Activated T-helper 1 cell treated with anti-CD3 and anti-CD28 coated beads, Interleukin-12 subunit alpha, Interleukin-12 subunit beta, Interleukin-2, Interleukin-4 antibody, amounts not matched to agents 30 ng/mL and 10 ng/mL and 1 ng/mL, durations not matched to agents 14 hours and 24 hours and 36 hours (primary cell): ENCODE measurements at regions of chr12 and their contacts with region 1.

Region 1: DNA sequence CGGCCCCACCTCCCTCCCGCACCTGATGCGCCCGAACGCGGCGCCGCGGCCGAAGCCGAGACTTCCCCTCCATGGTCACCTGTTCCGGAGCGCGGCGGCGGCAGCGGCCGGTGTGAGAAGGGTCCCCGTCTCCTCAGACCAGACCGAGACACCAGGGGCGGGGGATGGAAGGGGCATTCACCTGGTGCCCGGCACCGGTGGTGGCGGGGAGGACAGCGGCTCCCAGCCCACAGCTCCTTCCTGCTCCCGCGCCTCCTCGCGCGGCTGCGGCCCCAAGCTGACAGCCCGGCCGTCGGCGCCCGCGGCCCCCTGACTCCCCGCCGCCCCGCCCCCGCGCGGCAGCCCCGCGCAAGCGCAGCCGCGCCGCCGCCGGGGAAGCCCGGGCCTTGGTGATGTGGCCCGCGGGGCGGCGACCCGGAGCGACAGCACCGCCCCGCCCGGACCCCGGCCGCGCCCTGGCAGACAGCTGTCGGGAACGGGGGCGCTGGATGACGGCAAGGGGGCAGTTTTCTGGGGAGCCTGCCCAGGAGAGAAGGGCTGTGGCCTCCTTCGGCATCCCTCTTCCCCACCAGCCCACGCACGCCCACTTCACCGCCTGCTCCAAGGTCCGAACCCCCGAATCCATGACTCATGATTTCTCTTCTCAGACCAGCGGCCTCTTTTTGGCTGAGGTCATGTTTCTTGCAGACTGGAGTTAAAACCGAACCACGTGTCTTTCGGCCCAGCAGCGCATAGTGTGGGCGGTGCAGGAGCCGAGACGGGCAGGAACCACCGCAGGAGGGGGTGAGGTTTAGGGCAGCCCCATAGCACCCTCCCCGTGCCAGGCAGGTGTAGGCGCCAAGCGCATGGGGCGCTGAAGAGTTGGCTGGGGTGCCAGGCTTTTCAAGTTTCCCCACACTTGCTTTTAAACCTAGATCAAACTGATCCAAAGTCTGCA is at the start of gene SLC41A2:
- DNase-seq: peak; percentile 80
- H3K4me3 Mint-ChIP-seq: peak within 1 kb of the TSS; percentile 90
- H3K27ac Mint-ChIP-seq: peak within 1 kb of the TSS; percentile 96
- H3K4me1 Mint-ChIP-seq: peaks cover 44% of the 10 kb centered on the region
- H3K27me3 Mint-ChIP-seq: peaks cover 24% of the 10 kb centered on the region
- total RNA-seq, gene SLC41A2: 16.4 and 19.0 TPM in 2 replicates

Region 2: DNA sequence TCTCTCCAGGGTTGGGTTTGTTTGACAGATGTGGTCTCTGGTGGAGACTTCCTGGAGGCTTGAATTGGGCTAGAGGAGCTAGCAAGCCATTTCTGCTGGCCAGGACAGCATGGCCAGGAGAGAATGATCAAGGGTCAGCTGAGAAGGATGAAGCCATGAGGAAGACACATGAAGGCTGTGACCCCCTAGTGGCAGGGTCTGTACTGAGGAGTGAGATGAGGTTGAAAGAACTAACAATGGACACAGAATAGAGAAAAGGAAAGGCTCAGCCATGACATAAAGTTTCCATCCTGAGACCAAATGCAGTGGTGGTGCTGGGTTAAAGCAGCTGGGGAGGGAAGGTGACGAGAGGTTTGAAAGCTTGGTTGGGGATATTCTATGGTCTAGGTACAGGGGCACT is 1207.1 kb before region 1 on chr12:
- intact Hi-C with region 1: no loop called
- DNase-seq: no peak
- H3K4me3 Mint-ChIP-seq: no peak overlapping the region
- H3K27ac Mint-ChIP-seq: no peak overlapping the region
- H3K4me1 Mint-ChIP-seq: no peaks in the 10 kb centered on the region
- H3K27me3 Mint-ChIP-seq: peaks cover 4% of the 10 kb centered on the region

Region 3: DNA sequence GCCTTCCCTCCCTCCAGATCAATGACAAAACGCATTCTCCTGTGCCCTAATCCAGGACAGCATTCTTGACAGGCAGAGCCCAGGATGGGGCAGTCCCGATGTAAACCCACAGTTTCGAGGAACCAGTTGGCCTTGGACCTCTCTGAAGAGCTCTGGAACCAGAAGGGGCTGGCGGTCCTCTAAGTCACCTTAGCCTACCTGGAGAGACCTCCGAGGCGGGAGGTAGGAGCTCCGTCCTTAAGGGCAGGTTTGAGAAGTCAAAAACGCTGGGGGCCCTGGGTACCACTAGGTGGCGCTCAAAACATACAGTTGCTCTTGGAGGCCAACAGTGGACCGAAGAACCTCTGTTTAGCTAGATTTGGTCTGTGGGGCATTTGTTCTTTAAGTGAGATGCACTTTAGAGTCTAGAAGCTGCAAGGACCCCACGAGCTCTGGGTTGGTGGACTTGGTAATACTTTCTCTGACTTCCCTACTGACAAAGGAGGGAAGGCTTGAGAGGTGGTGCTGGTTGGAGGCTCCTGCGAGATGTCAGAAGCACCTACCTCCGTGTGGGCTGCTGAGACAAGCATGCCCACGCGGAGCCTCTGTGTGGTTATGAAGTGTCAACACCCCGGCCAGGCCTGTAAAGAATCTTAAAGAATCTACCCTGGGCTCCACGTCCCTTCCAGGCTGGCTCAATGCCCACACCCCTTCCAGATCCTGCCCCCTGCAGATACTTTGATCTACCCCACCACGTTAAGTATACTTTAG is 576.4 kb before region 1 on chr12:
- intact Hi-C with region 1: loop called (anchors 1 kb)
- DNase-seq: peak; percentile 69
- H3K4me3 Mint-ChIP-seq: peak overlapping the region; percentile 52
- H3K27ac Mint-ChIP-seq: peak overlapping the region; percentile 33
- H3K4me1 Mint-ChIP-seq: peaks cover 20% of the 10 kb centered on the region
- H3K27me3 Mint-ChIP-seq: peaks cover 2% of the 10 kb centered on the region

Region 4: GRCh38 chr12:104653730-104654664 is 304.3 kb before region 1 on chr12:
- intact Hi-C with region 1: no loop called
- DNase-seq: no peak
- H3K4me3 Mint-ChIP-seq: no peak overlapping the region
- H3K27ac Mint-ChIP-seq: peak overlapping the region; percentile 31
- H3K4me1 Mint-ChIP-seq: peaks cover 78% of the 10 kb centered on the region
- H3K27me3 Mint-ChIP-seq: no peaks in the 10 kb centered on the region

Region 5: DNA sequence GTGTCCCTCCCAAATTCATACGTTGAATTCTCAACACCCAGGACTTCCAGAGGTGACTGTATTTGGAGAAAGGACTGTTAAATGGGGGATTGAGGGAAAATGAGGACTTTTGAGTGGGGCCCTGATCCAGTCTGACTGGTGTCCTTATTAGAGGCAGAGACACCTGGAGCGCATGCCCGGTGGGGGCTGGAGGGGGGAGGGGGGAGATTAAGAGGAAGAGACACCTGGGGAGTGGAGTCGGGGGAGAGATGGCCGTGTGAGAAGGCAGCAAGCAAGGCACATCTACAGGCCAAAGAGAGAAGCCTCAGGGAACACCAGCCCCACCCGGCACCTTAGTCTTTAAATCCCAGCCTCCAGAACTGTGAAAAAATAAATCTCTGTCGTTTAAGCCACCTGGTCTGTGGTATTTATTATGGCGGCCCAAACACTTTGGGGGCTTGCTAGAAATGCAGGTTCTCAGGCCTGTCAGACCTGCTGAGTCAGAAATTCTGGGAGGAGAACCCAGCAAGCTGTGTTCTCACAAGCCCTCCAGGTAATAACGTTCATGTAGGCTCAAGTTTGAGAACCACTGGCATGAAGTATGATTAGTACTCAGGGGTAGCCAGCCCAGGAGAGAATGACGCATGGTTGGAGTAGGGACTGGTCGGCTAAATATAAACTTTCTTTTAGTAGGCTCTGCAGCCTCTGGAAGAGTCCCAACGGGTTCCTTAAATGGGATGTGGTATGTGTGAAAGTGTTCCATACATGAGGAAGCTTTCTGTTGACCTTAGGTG is 209.7 kb before region 1 on chr12:
- intact Hi-C with region 1: loop called (anchors 5 kb)
- DNase-seq: no peak
- H3K4me3 Mint-ChIP-seq: peak overlapping the region; percentile 34
- H3K27ac Mint-ChIP-seq: peak overlapping the region; percentile 25
- H3K4me1 Mint-ChIP-seq: peaks cover 74% of the 10 kb centered on the region
- H3K27me3 Mint-ChIP-seq: no peaks in the 10 kb centered on the region

Region 6: DNA sequence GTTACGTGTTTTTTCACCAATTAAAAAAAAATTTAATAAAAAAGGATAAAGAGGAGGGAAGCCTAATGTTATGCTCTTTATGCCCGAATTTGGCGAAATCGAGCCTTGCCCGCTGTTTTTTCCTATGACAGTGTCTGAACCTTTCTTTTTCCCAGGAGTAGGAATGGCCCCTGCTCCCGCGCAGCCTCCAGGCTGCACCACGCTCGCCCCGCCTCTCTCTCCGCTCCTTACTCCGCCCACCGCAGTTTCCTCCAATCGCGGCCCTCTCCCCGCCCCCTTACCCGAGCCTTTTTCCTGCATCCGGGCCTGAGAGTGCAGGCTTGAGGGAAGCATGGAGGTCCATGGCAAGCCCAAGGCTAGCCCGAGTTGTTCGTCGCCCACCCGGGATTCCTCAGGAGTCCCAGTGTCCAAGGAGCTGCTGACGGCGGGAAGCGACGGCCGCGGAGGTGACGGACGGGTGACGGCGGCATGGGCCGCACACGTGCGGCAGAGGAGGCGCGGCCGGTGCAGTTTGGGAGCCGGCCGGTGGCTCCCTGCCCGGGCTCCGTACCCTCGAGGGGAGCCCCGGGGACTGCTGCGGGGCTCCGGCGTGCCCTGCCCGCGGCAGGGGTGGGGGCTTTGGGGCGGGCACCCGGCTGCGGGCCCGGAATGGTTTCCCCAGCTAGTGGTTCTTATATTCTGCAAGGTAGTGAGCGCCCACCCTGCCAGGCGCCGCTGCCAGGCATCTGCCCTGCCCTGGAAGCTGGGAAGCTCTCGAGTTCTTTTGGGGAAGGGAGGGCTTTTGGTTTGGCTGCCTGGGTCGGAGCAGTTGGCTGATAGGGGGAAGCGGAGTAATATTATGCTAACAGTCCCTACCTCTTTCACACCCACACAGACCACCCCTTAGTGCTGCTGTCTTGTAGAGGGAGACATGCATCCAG is 28.0 kb after region 1 on chr12 and contains the start of gene NOPCHAP1:
- intact Hi-C with region 1: loop called (anchors 1 kb)
- DNase-seq: peak; percentile 83
- H3K4me3 Mint-ChIP-seq: peak within 1 kb of the TSS; percentile 89
- H3K27ac Mint-ChIP-seq: peak within 1 kb of the TSS; percentile 57
- H3K4me1 Mint-ChIP-seq: peaks cover 44% of the 10 kb centered on the region
- H3K27me3 Mint-ChIP-seq: peaks cover 3% of the 10 kb centered on the region
- total RNA-seq, gene NOPCHAP1: 28.0 and 40.0 TPM in 2 replicates

Region 7: DNA sequence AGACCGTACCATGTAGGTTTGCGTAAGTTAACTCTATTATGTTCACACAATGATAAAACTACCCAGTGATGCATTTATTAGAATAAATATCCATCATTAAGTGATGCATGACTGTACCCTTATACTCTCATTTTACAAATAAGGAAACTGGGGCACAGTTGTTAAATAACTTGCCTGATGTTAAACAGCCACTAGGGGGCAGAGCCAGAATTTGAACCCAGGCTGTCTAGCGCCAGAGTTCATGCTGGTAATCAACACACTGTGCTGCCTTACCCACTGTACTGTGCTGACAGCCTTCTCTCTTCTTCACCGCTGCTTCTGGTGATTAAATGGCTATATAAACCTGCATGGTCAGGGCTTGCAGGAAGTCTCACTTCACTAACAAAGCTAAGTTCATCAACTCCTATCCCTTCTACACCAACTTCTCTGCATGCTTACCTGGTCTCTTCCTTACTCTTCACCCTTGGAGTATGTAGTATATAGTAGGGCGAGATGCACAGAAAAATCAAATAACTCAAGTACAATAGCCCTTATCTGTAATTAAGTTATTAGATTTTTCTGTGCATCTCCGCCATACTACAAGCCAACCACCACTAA is 321.3 kb after region 1 on chr12:
- intact Hi-C with region 1: no loop called
- DNase-seq: peak; percentile 21
- H3K4me3 Mint-ChIP-seq: no peak overlapping the region
- H3K27ac Mint-ChIP-seq: no peak overlapping the region
- H3K4me1 Mint-ChIP-seq: no peaks in the 10 kb centered on the region
- H3K27me3 Mint-ChIP-seq: peaks cover 15% of the 10 kb centered on the region